Sigmoid colon (tissue), 7 donors: ENCODE measurements at regions of chr17 and their contacts with region 1.

Region 1: GRCh38 chr17:12020642-12021622 is at the start of gene MAP2K4:
- DNase-seq: peak; percentile 95
- H3K4me3 ChIP-seq: peak within 1 kb of the TSS; percentile 69 to 97 (median 91)
- H3K27ac ChIP-seq: peak within 1 kb of the TSS; percentile 84 to 93 (median 90)
- H3K4me1 ChIP-seq: peaks cover 0 to 41% (median 32%) of the 10 kb centered on the region in 4 donors
- H3K27me3 ChIP-seq: no peaks in the 10 kb centered on the region
- CTCF ChIP-seq: no peak
- EP300 ChIP-seq: peak in 1 of 4 donors; percentile 8
- POLR2A ChIP-seq: peak in 1 of 2 donors; percentile 26
- total RNA-seq, gene MAP2K4: 27.4 to 41.3 (median 33.2) TPM

Region 2: GRCh38 chr17:11948789-11949188 is 72.1 kb before region 1 on chr17:
- intact Hi-C with region 1: no loop called
- DNase-seq: no peak
- H3K4me3 ChIP-seq: peak overlapping the region in 3 of 4 donors; percentile 9 to 24 (median 22)
- H3K27ac ChIP-seq: no peak overlapping the region
- H3K4me1 ChIP-seq: peaks cover 0 to 5% (median 4%) of the 10 kb centered on the region in 4 donors
- H3K27me3 ChIP-seq: no peaks in the 10 kb centered on the region
- CTCF ChIP-seq: no peak
- EP300 ChIP-seq: no peak
- POLR2A ChIP-seq: no peak

Region 3: GRCh38 chr17:12107905-12108304 is 87.0 kb after region 1 on chr17:
- intact Hi-C with region 1: loop called (anchors 5 kb)
- DNase-seq: no peak
- H3K4me3 ChIP-seq: no peak overlapping the region
- H3K27ac ChIP-seq: no peak overlapping the region
- H3K4me1 ChIP-seq: peaks cover 0 to 8% (median 0%) of the 10 kb centered on the region in 4 donors
- H3K27me3 ChIP-seq: no peaks in the 10 kb centered on the region
- CTCF ChIP-seq: no peak
- EP300 ChIP-seq: no peak
- POLR2A ChIP-seq: no peak